AG04449 (cell line): ENCODE measurements at regions of chr5 and their contacts with region 1.

Region 1: GRCh38 chr5:136174021-136174659 is 18.8 kb downstream of the SMIM32 start:
- DNase-seq: peak; percentile 37
- H3K4me3 ChIP-seq: no peak overlapping the region
- CTCF ChIP-seq: peak; percentile 71

Region 2: GRCh38 chr5:135887351-135887864 is 286.7 kb before region 1 on chr5:
- CTCF ChIA-PET with region 1: interaction called, 23 read pairs
- POLR2A ChIA-PET with region 1: no interaction called
- DNase-seq: peak; percentile 5
- H3K4me3 ChIP-seq: no peak overlapping the region
- CTCF ChIP-seq: peak; percentile 77

Region 3: DNA sequence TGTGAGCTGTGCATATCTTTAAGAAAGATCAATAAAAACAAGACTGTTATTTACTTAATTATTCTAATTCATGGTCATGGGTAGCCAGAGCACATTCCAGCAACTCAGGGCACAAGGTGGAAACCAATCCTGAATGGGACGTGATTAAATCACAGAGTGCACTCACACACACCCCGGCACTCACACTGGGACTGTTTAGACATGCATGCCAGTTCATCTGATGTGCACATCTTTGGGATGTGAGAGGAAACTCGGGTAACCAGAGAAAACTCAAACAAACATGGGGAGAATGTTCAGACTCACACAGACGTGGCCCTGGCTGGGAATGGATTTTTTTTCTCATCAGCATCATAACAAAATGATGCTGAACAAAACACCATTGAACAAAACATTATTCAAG is 12.1 kb before region 1 on chr5:
- CTCF ChIA-PET with region 1: interaction called, 33 read pairs
- POLR2A ChIA-PET with region 1: no interaction called
- DNase-seq: no peak
- H3K4me3 ChIP-seq: no peak overlapping the region
- CTCF ChIP-seq: no peak

Region 4: GRCh38 chr5:136193322-136193935 is 19.3 kb after region 1 on chr5:
- CTCF ChIA-PET with region 1: interaction called, 14 read pairs
- POLR2A ChIA-PET with region 1: no interaction called
- DNase-seq: no peak
- H3K4me3 ChIP-seq: peak overlapping the region; percentile 45
- CTCF ChIP-seq: no peak